ENCODE measurements at regions of chr15 and their contacts with region 1.

Region 1: DNA sequence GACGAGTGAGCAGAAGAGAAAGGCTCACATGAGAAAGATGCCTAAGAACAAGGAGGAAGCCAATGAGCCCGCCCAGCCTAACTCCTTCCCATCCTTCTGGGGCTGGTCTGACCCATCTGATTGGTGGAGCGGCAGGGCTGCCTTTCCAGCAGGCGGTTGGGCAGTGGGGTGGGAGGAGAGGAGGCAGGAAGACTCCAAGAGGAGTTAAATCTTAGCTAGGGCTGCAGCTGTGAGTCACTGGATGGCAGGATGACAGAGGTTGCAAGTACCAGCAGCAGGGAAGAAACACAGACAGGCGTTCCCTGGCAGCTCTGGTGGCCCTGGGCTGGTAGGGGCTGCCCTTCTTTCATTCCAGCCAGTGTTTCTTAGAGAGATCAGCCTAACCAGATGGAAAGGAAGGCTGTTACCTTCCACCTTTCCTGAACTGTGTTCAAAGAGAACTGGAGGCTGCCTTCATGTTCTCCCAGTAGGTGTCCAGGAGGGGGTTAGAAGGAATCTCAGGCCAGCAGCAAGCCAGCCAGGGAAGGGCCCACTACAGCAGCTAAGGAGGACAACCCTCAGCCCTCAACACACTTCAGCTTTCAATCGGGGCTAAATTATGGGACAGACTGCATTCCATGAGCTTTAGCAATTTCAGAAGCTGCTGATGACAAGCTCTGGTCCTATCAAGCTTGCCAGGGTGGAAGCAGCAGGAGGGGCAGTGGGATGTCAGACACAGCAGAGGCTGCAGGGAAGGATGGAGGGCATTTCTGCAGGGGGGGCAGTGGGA is 50.3 kb downstream of the CHSY1 start:
- DNase-seq: peak; percentile 93
- H3K4me3 ChIP-seq: no peak overlapping the region
- H3K27ac ChIP-seq: peak overlapping the region; percentile 36
- H3K4me1 ChIP-seq: peaks cover 23% of the 10 kb centered on the region
- H3K27me3 ChIP-seq: no peaks in the 10 kb centered on the region
- CTCF ChIP-seq: no peak
- POLR2A ChIP-seq: peak; percentile 35

Region 2: DNA sequence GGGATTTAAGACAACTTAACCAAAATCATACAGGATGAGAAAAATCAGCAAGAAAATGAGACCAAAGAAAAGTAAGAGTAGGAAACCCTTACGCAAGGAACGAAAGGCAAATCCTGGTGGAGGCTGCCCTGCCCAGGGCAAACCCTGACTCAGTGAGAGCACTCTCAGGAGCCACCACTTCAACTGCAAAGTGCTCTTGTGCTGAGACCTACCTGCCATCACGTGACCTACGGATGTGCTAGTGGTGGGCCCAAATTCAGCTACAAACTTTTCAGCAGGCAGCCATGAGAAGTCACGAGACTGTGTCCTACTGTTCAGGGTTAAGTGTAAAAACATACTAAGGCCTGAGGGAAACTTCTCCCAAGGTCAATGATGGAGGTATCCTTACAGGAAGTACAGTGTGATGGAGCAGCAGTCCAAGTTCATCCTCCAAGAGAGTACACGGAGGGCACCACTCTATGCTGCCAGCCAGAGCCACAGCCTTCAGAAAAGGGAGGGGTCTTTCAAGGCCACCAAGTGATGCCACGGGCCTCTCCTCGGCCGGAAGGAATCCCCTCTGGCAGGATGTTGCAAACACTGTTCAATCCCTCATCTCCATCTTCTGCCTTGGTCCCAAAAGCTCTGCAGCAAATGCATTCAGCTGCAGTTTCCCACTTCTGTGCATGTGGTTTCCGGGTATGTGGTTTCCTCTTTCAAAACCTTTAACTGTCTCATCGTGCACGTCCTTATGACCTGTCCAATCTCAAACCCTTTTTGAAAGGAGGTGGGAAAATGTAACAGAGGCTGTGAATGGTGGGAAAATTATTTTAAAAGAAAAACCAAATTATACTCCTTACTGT is 40.8 kb after region 1 on chr15:
- CTCF ChIA-PET with region 1: interaction called, 3 read pairs
- POLR2A ChIA-PET with region 1: no interaction called
- dilution Hi-C with region 1: loop called (anchors 5 kb)
- intact Hi-C with region 1: no loop called
- DNase-seq: no peak
- H3K4me3 ChIP-seq: no peak overlapping the region
- H3K27ac ChIP-seq: no peak overlapping the region
- H3K4me1 ChIP-seq: peaks cover 47% of the 10 kb centered on the region
- H3K27me3 ChIP-seq: no peaks in the 10 kb centered on the region
- CTCF ChIP-seq: no peak
- POLR2A ChIP-seq: no peak

Measured in endothelial cell of umbilical vein (primary cell).